GM12878 (cell line): ENCODE measurements at regions of chr17 and their contacts with region 1.

Region 1: GRCh38 chr17:4966844-4967538 is 626 bp downstream of the SPAG7 start:
- DNase-seq: peak; percentile 100
- ATAC-seq: peak; percentile 91
- H3K4me3 ChIP-seq: peak overlapping the region; percentile 89
- H3K27ac ChIP-seq: peak overlapping the region; percentile 100
- H3K4me1 ChIP-seq: peaks cover 14% of the 10 kb centered on the region
- H3K27me3 ChIP-seq: no peaks in the 10 kb centered on the region
- CTCF ChIP-seq: no peak
- EP300 ChIP-seq: no peak
- POLR2A ChIP-seq: peak; percentile 67
- RAD21 ChIP-seq: no peak

Region 2: DNA sequence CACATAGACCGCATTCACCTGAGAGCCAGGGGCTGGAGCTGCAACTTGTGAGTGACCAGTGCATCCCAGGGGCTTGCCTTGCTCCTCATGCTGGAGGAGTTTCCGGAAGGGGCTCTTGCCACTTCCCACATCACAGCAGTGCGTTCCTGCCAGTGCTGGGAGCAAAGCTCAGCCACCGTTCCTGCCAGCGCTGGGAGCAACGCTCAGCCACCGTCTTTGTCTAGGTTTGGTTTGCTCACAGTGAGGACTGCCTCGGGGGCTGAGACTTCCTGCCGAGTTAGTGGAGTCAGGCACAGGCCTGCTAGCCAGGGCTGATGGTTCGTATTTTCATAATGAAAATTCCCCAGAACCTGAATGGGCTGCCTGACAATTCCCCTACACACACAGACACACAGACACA is 58.7 kb before region 1 on chr17:
- CTCF ChIA-PET with region 1: interaction called, 19 read pairs
- POLR2A ChIA-PET with region 1: interaction called, 6 read pairs
- RAD21 ChIA-PET with region 1: interaction called, 28 read pairs
- SMC1A ChIA-PET with region 1: interaction called, 17 read pairs
- in situ Hi-C with region 1: no loop called
- intact Hi-C with region 1: loop called (anchors 1 kb)
- DNase-seq: no peak
- ATAC-seq: no peak
- H3K4me3 ChIP-seq: no peak overlapping the region
- H3K27ac ChIP-seq: no peak overlapping the region
- H3K4me1 ChIP-seq: peaks cover 7% of the 10 kb centered on the region
- H3K27me3 ChIP-seq: no peaks in the 10 kb centered on the region; a peak in 1 of 4 replicates
- CTCF ChIP-seq: no peak
- EP300 ChIP-seq: no peak
- POLR2A ChIP-seq: no peak
- RAD21 ChIP-seq: no peak

Region 3: DNA sequence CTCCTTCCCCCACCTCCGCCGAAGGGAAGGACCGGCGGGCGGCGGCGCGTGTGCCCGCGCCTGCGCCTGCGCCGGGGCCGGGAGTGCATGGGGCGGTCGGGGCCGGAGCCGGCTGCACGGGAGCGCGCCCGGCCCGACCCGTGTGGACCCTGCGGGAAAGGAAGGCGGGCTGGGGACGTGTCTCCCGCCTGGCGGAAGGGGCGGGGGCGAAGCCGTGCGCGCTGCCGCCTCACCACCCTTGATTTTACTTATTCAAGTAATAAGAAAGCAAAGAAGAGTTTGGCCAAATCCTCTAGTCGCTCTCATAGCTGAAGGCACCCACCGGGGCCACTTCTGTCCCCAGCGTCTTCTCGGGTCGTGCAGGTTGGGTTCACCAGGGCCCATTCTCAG is 18.1 kb before region 1 on chr17:
- CTCF ChIA-PET with region 1: interaction called, 23 read pairs
- POLR2A ChIA-PET with region 1: interaction called, 272 read pairs
- RAD21 ChIA-PET with region 1: interaction called, 73 read pairs
- SMC1A ChIA-PET with region 1: interaction called, 50 read pairs
- in situ Hi-C with region 1: no loop called
- intact Hi-C with region 1: loop called (anchors 1 kb)
- DNase-seq: no peak
- ATAC-seq: peak; percentile 51
- H3K4me3 ChIP-seq: peak overlapping the region; percentile 96
- H3K27ac ChIP-seq: peak overlapping the region; percentile 85
- H3K4me1 ChIP-seq: peaks cover 33% of the 10 kb centered on the region
- H3K27me3 ChIP-seq: no peaks in the 10 kb centered on the region
- CTCF ChIP-seq: no peak
- EP300 ChIP-seq: no peak
- POLR2A ChIP-seq: no peak
- RAD21 ChIP-seq: no peak

Region 4: GRCh38 chr17:4980644-4981216 is 13.7 kb after region 1 on chr17:
- CTCF ChIA-PET with region 1: interaction called, 10 read pairs
- POLR2A ChIA-PET with region 1: interaction called, 10 read pairs
- RAD21 ChIA-PET with region 1: interaction called, 3 read pairs
- SMC1A ChIA-PET with region 1: interaction called, 4 read pairs
- in situ Hi-C with region 1: no loop called
- intact Hi-C with region 1: no loop called
- DNase-seq: no peak
- ATAC-seq: peak; percentile 92
- H3K4me3 ChIP-seq: no peak overlapping the region
- H3K27ac ChIP-seq: 0 out of 2 replicates have a peak overlapping the region, but pooled peaks have one; percentile 3
- H3K4me1 ChIP-seq: peaks cover 12% of the 10 kb centered on the region
- H3K27me3 ChIP-seq: no peaks in the 10 kb centered on the region
- CTCF ChIP-seq: peak; percentile 63 to 68 (median 66)
- EP300 ChIP-seq: no peak
- POLR2A ChIP-seq: no peak; the same call in 1 of the 2 replicates
- RAD21 ChIP-seq: peak; percentile 65

Region 5: GRCh38 chr17:4997302-4998026 is 30.5 kb after region 1 on chr17 and contains the starts of genes INCA1 and KIF1C:
- CTCF ChIA-PET with region 1: no interaction called
- POLR2A ChIA-PET with region 1: interaction called, 14 read pairs
- RAD21 ChIA-PET with region 1: interaction called, 7 read pairs
- SMC1A ChIA-PET with region 1: interaction called, 4 read pairs
- in situ Hi-C with region 1: no loop called
- intact Hi-C with region 1: no loop called
- DNase-seq: peak; percentile 42
- ATAC-seq: peak; percentile 93
- H3K4me3 ChIP-seq: peak within 1 kb of the TSS; percentile 99
- H3K27ac ChIP-seq: peak within 1 kb of the TSS; percentile 80
- H3K4me1 ChIP-seq: peaks cover 11% of the 10 kb centered on the region
- H3K27me3 ChIP-seq: no peaks in the 10 kb centered on the region
- CTCF ChIP-seq: no peak
- EP300 ChIP-seq: no peak
- POLR2A ChIP-seq: peak; percentile 70
- RAD21 ChIP-seq: no peak
- polyA plus RNA-seq, gene INCA1: 0.61 to 0.64 TPM
- polyA plus RNA-seq, gene KIF1C: 1.4 to 1.5 TPM

Region 6: GRCh38 chr17:5031365-5032082 is 64.5 kb after region 1 on chr17:
- CTCF ChIA-PET with region 1: interaction called, 7 read pairs
- POLR2A ChIA-PET with region 1: interaction called, 3 read pairs
- RAD21 ChIA-PET with region 1: interaction called, 12 read pairs
- SMC1A ChIA-PET with region 1: interaction called, 5 read pairs
- in situ Hi-C with region 1: no loop called
- intact Hi-C with region 1: no loop called
- DNase-seq: peak; percentile 55
- ATAC-seq: peak; percentile 92
- H3K4me3 ChIP-seq: peak overlapping the region; percentile 46
- H3K27ac ChIP-seq: peak overlapping the region; percentile 66
- H3K4me1 ChIP-seq: peaks cover 14% of the 10 kb centered on the region
- H3K27me3 ChIP-seq: no peaks in the 10 kb centered on the region
- CTCF ChIP-seq: peak; percentile 67 to 81 (median 69)
- EP300 ChIP-seq: no peak
- POLR2A ChIP-seq: no peak; the same call in 1 of the 2 replicates
- RAD21 ChIP-seq: peak; percentile 70

Region 7: DNA sequence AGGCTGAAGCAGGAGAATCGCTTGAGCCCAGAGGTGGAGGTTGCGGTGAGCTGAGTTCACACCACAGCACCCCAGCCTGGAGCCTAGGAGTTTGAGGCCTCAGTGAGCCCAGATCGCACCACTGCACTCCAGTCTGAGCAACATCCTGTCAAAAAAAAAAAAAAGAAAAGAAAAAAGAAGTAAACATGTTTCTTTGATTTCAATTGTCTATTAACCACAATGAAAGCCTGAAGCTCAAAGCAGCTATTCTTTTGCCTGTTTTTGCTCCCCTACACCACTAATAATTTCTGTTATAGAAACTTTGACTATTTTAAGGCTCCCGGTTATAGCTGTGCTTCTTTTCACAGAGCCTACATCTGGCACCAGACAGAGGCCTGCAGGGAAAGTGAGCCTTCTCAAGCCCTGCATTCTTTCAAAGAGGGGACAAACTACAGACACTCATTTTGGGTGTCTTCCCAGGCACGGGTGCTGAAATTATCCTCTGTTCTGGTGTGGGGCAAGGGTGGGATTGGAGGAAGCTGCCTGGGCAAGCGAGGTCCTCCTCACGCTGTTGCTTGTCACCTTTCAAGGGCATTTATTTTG is 82.4 kb after region 1 on chr17:
- CTCF ChIA-PET with region 1: no interaction called
- POLR2A ChIA-PET with region 1: no interaction called
- RAD21 ChIA-PET with region 1: no interaction called
- SMC1A ChIA-PET with region 1: no interaction called
- in situ Hi-C with region 1: no loop called
- intact Hi-C with region 1: no loop called
- DNase-seq: peak; percentile 23
- ATAC-seq: peak; percentile 66
- H3K4me3 ChIP-seq: no peak overlapping the region
- H3K27ac ChIP-seq: peak overlapping the region; percentile 30
- H3K4me1 ChIP-seq: peaks cover 11% of the 10 kb centered on the region
- H3K27me3 ChIP-seq: no peaks in the 10 kb centered on the region
- CTCF ChIP-seq: no peak
- EP300 ChIP-seq: no peak
- POLR2A ChIP-seq: no peak
- RAD21 ChIP-seq: no peak

Region 8: DNA sequence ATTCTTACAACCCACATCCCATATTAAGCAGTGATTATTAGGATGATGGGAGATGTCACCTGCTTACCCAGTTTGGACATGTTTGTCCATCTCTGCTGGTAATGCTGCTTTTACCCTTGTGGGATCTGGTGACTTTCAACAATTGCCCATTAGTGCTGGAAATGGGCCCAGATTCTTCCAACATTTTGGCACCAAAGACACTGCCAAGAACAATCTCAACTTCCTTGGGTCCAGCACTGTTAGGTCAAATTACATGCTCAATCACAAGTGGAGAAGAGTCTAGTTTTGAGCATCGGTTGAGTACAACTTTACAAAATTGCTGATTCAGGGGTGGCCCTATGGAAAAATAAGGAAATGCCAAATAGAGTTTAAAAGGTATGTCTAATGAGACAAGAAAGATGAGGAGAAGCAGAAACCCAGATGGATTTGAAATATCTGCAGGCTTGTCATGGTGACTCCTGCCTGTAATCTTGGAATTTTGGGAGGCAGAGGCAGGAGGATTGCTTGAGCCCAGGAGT is 98.3 kb after region 1 on chr17:
- CTCF ChIA-PET with region 1: interaction called, 18 read pairs
- POLR2A ChIA-PET with region 1: interaction called, 4 read pairs
- RAD21 ChIA-PET with region 1: interaction called, 11 read pairs
- SMC1A ChIA-PET with region 1: interaction called, 7 read pairs
- in situ Hi-C with region 1: no loop called
- intact Hi-C with region 1: loop called (anchors 5 kb)
- DNase-seq: no peak
- ATAC-seq: no peak
- H3K4me3 ChIP-seq: no peak overlapping the region
- H3K27ac ChIP-seq: no peak overlapping the region
- H3K4me1 ChIP-seq: no peaks in the 10 kb centered on the region
- H3K27me3 ChIP-seq: no peaks in the 10 kb centered on the region
- CTCF ChIP-seq: no peak
- EP300 ChIP-seq: no peak
- POLR2A ChIP-seq: no peak
- RAD21 ChIP-seq: no peak